ENCODE measurements at regions of chr4 and their contacts with region 1.

Region 1: DNA sequence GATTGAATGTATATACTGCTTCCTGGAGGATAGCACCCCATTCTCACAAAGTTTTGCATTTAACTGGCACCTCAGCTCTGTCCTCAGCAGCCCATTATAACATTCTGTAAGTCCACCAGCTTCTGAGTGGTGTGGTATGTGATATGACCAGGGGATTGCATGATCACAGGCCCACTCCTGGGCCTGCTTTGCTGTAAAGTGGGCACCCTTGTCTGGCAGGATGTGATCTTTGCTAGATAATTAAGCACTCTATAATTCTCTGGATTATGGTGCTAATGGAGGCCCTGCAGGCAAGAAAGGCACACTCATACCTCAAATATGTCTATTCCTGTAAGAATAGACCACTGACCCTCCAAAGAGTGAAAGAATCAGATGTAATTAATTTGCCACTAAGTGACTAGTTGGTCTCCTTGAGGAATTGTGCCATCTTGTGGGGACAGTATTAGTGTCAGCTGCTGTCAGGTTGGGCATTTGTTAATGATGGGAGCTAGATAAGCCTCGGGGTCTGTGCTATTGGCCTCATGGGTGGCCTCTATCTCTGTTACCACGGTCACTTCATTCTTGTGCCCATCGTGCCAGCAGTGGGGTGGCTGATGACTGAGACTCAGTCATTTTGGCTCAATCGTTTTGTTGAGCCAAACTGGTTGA is 2.2 kb upstream of the CFI start:
- DNase-seq: no peak
- ATAC-seq: peak in 1 of 4 donors; percentile 61
- H3K4me3 ChIP-seq: no peak overlapping the region
- H3K27ac ChIP-seq: no peak overlapping the region
- H3K4me1 ChIP-seq: peaks cover 0 to 7% (median 0%) of the 10 kb centered on the region in 12 donors
- H3K27me3 ChIP-seq: no peaks in the 10 kb centered on the region
- CTCF ChIP-seq: peak in 8 of 12 donors; percentile 17 to 47 (median 36)
- POLR2A ChIP-seq: no peak

Region 2: DNA sequence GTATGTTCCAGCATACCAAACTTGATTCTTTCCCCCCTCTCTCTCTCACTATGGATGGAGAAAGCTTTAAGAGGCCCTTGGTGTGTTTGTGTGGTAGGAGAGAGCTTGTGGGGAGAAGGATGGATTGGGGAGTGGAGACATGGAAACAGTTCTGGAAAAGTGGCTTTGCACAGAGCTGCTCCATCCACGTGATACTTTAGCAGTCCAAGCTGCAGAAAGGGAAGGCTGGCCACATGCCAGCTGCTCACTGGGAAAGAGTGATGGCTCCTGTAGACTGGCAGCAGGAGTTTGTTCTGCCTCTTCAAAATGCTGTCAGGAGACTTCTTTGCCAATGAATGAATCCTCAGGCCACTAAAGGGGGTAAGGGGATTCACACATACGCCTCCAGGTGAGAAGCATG is 392.1 kb before region 1 on chr4:
- intact Hi-C with region 1: no loop called
- DNase-seq: peak; percentile 35 to 75 (median 62)
- ATAC-seq: peak; percentile 71 to 83 (median 74)
- H3K4me3 ChIP-seq: no peak overlapping the region
- H3K27ac ChIP-seq: no peak overlapping the region
- H3K4me1 ChIP-seq: peaks cover 0 to 14% (median 5%) of the 10 kb centered on the region in 12 donors
- H3K27me3 ChIP-seq: no peaks in the 10 kb centered on the region
- CTCF ChIP-seq: no peak
- POLR2A ChIP-seq: no peak

Region 3: GRCh38 chr4:109729718-109730618 is 74.1 kb before region 1 on chr4 and contains the start of gene PLA2G12A:
- intact Hi-C with region 1: loop called in 1 of 10 experiments (anchors 10 kb)
- DNase-seq: peak; percentile 66 to 83 (median 70)
- ATAC-seq: peak; percentile 84 to 97 (median 94)
- H3K4me3 ChIP-seq: peak within 1 kb of the TSS; percentile 78 to 98 (median 92)
- H3K27ac ChIP-seq: peak within 1 kb of the TSS; percentile 8 to 90 (median 76)
- H3K4me1 ChIP-seq: peaks cover 0 to 20% (median 12%) of the 10 kb centered on the region in 12 donors
- H3K27me3 ChIP-seq: no peaks in the 10 kb centered on the region
- CTCF ChIP-seq: no peak
- POLR2A ChIP-seq: peak in 1 of 2 donors; percentile 64
- total RNA-seq, gene PLA2G12A: 32.6 to 68.5 (median 58.5) TPM

Region 4: DNA sequence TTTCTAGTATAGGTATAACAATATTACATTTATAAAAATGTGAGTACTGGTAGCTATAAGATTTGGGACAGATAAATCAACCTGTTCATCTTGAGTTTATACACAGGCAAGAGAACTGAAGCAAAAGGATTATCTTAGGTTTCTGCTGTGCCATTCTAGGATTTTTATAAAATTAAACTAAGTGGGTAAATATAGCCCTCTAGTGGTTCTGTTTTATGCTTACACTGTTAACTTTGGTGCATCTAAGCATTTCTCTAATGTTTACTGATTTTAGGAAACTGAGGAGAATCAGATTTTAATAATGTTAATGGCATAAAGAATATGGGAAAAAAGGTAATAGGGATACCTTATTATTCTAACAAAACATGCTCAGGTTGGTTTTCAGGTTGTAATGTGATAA is 22.7 kb after region 1 on chr4:
- intact Hi-C with region 1: no loop called
- DNase-seq: no peak
- ATAC-seq: no peak
- H3K4me3 ChIP-seq: no peak overlapping the region
- H3K27ac ChIP-seq: no peak overlapping the region
- H3K4me1 ChIP-seq: no peaks in the 10 kb centered on the region
- H3K27me3 ChIP-seq: no peaks in the 10 kb centered on the region
- CTCF ChIP-seq: peak; percentile 44 to 66 (median 54)
- POLR2A ChIP-seq: no peak

Measured in heart left ventricle (tissue), 16 donors.